T-cell (primary cell): ENCODE measurements at regions of chr2 and their contacts with region 1.

Region 1: GRCh38 chr2:165283342-165283741 is 44.1 kb downstream of the SCN2A start:
- DNase-seq: no peak
- ATAC-seq: no peak
- H3K4me3 ChIP-seq: no peak overlapping the region
- H3K4me3 Mint-ChIP-seq: no peak overlapping the region
- H3K27ac ChIP-seq: no peak overlapping the region
- H3K27ac Mint-ChIP-seq: no peak overlapping the region
- H3K4me1 ChIP-seq: no peaks in the 10 kb centered on the region
- H3K4me1 Mint-ChIP-seq: no peaks in the 10 kb centered on the region
- H3K27me3 ChIP-seq: peaks cover 0 to 2% of the 10 kb centered on the region in 2 experiments
- H3K27me3 Mint-ChIP-seq: no peaks in the 10 kb centered on the region

Region 2: GRCh38 chr2:165149439-165149838 is 133.9 kb before region 1 on chr2:
- CTCF ChIA-PET with region 1: no interaction called
- POLR2A ChIA-PET with region 1: no interaction called
- DNase-seq: peak in 1 of 35 experiments; percentile 2
- ATAC-seq: peak in 1 of 4 experiments; percentile 36
- H3K4me3 ChIP-seq: no peak overlapping the region
- H3K4me3 Mint-ChIP-seq: no peak overlapping the region
- H3K27ac ChIP-seq: no peak overlapping the region
- H3K27ac Mint-ChIP-seq: no peak overlapping the region
- H3K4me1 ChIP-seq: no peaks in the 10 kb centered on the region
- H3K4me1 Mint-ChIP-seq: no peaks in the 10 kb centered on the region
- H3K27me3 ChIP-seq: no peaks in the 10 kb centered on the region
- H3K27me3 Mint-ChIP-seq: peaks cover 0 to 5% of the 10 kb centered on the region in 2 donors

Region 3: DNA sequence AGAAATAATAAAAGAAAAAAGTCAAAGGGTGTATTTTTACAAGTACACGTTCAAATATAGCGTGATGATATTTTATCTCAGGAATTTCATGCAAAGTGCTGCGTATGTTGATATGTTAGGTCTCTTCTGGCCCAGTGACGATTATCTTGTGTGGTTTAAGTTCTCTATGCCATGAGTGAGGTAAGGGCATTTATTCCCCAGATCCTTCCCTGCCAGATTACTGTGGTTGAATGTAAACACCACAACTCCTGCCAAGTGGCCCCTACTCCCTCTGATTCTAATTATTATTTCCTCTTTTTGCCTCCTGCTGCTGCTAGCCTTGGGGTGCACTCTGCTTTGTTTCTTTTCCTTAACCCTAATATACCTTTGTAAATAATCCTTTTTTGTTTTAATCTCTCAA is 32.0 kb before region 1 on chr2:
- CTCF ChIA-PET with region 1: no interaction called
- POLR2A ChIA-PET with region 1: interaction called in 1 of 2 experiments, 12 read pairs
- DNase-seq: no peak
- ATAC-seq: no peak
- H3K4me3 ChIP-seq: no peak overlapping the region
- H3K4me3 Mint-ChIP-seq: no peak overlapping the region
- H3K27ac ChIP-seq: no peak overlapping the region
- H3K27ac Mint-ChIP-seq: no peak overlapping the region
- H3K4me1 ChIP-seq: no peaks in the 10 kb centered on the region
- H3K4me1 Mint-ChIP-seq: no peaks in the 10 kb centered on the region
- H3K27me3 ChIP-seq: no peaks in the 10 kb centered on the region
- H3K27me3 Mint-ChIP-seq: no peaks in the 10 kb centered on the region

Region 4: GRCh38 chr2:165293440-165294353 is 10.4 kb after region 1 on chr2:
- CTCF ChIA-PET with region 1: no interaction called
- POLR2A ChIA-PET with region 1: interaction called in 1 of 2 experiments, 12 read pairs
- DNase-seq: peak in 31 of 35 experiments; percentile 1 to 89 (median 30)
- ATAC-seq: peak; percentile 98 to 100 (median 100)
- H3K4me3 ChIP-seq: no peak overlapping the region
- H3K4me3 Mint-ChIP-seq: no peak overlapping the region
- H3K27ac ChIP-seq: no peak overlapping the region
- H3K27ac Mint-ChIP-seq: no peak overlapping the region
- H3K4me1 ChIP-seq: peaks cover 0 to 4% of the 10 kb centered on the region in 2 experiments
- H3K4me1 Mint-ChIP-seq: peaks cover 0 to 5% (median 3%) of the 10 kb centered on the region in 3 donors
- H3K27me3 ChIP-seq: no peaks in the 10 kb centered on the region
- H3K27me3 Mint-ChIP-seq: peaks cover 2 to 5% of the 10 kb centered on the region in 2 donors

Region 5: GRCh38 chr2:165313509-165313908 is 30.2 kb after region 1 on chr2:
- CTCF ChIA-PET with region 1: no interaction called
- POLR2A ChIA-PET with region 1: no interaction called
- DNase-seq: no peak
- ATAC-seq: no peak
- H3K4me3 ChIP-seq: no peak overlapping the region
- H3K4me3 Mint-ChIP-seq: no peak overlapping the region
- H3K27ac ChIP-seq: no peak overlapping the region
- H3K27ac Mint-ChIP-seq: no peak overlapping the region
- H3K4me1 ChIP-seq: no peaks in the 10 kb centered on the region
- H3K4me1 Mint-ChIP-seq: no peaks in the 10 kb centered on the region
- H3K27me3 ChIP-seq: no peaks in the 10 kb centered on the region
- H3K27me3 Mint-ChIP-seq: no peaks in the 10 kb centered on the region